PC-3 (cell line): ENCODE measurements at regions of chr4 and their contacts with region 1.

Region 1: DNA sequence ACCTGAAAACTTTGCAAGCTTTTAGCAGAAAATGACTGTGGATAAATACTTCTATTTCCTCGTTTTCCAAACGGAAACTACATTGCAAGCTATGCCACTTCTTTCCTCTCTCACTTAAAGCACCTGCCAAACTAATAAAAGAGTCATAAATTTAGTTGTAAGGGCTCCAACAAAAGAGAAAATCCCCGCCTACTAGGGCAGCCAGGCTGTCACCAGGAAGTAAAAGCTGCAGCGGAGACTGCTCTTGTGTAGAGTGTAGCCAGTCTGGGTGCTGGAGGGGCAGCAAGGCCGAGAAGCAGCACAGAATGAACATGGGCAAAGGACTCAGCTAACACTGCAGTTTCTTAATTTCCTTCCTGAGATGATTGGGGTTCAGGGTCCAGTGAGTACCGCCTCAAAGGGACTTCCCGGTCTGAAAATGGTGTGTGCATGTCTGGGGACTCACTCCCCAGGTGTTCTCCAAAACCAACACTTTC is 89.3 kb upstream of the MAML3 start:
- DNase-seq: peak; percentile 75
- ATAC-seq: peak; percentile 80
- H3K4me3 ChIP-seq: peak overlapping the region; percentile 21; the same call in 1 of the 2 replicates
- H3K27ac ChIP-seq: peak overlapping the region; percentile 33
- H3K4me1 ChIP-seq: peaks cover 20% of the 10 kb centered on the region
- H3K27me3 ChIP-seq: no peaks in the 10 kb centered on the region
- CTCF ChIP-seq: no peak

Region 2: DNA sequence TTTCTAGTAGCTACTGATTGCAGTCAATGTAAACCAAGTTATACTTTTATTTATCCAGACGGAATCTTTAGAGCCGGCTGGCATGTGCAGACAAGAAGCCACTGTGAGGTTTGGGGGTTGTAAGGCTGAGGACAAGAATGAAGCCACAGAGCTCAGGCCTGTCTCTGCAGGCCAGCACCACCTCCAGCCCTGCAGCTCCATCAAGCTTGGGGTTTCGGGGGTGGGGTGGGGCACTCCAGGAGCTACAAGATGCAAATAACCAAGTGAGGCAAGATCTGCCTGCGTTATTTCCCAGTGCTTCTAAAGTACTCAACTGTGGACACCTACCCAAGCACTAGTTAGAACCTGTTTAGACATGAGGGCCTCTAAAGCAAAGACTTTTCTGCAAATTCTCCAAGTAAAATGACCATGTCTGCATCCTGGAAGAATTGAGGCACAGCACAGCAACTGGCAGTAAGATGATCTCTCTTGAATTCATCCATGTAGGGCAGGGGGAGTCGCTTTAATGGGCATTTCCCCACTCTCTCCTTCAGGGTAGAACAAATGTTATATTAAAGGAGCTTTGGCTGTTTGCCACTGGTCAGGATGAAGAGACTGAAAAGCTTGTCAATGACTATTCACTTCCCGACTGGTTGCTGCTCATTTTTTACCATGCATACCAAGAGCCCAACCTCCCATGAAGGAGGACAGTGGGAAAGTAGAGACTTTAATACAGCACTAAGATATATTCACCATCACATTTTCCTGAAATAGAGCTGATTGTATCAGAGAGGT is 355.2 kb before region 1 on chr4:
- CTCF ChIA-PET with region 1: no interaction called
- POLR2A ChIA-PET with region 1: no interaction called
- intact Hi-C with region 1: no loop called
- DNase-seq: peak; percentile 26
- ATAC-seq: no peak
- H3K4me3 ChIP-seq: no peak overlapping the region; the same call in 1 of the 2 replicates
- H3K27ac ChIP-seq: peak overlapping the region; percentile 50
- H3K4me1 ChIP-seq: peaks cover 49% of the 10 kb centered on the region
- H3K27me3 ChIP-seq: no peaks in the 10 kb centered on the region
- CTCF ChIP-seq: no peak

Region 3: GRCh38 chr4:140180577-140180976 is 62.7 kb before region 1 on chr4:
- CTCF ChIA-PET with region 1: no interaction called
- POLR2A ChIA-PET with region 1: no interaction called
- intact Hi-C with region 1: loop called (anchors 5 kb)
- DNase-seq: peak; percentile 88
- ATAC-seq: peak; percentile 76
- H3K4me3 ChIP-seq: no peak overlapping the region
- H3K27ac ChIP-seq: no peak overlapping the region
- H3K4me1 ChIP-seq: peaks cover 28% of the 10 kb centered on the region
- H3K27me3 ChIP-seq: no peaks in the 10 kb centered on the region
- CTCF ChIP-seq: no peak

Region 4: GRCh38 chr4:140556372-140557085 is 313.2 kb after region 1 on chr4:
- CTCF ChIA-PET with region 1: no interaction called
- POLR2A ChIA-PET with region 1: no interaction called
- intact Hi-C with region 1: no loop called
- DNase-seq: no peak
- ATAC-seq: no peak
- H3K4me3 ChIP-seq: no peak overlapping the region
- H3K27ac ChIP-seq: no peak overlapping the region
- H3K4me1 ChIP-seq: no peaks in the 10 kb centered on the region
- H3K27me3 ChIP-seq: no peaks in the 10 kb centered on the region
- CTCF ChIP-seq: no peak